AG04450 (cell line): ENCODE measurements at regions of chr19 and their contacts with region 1.

Region 1: DNA sequence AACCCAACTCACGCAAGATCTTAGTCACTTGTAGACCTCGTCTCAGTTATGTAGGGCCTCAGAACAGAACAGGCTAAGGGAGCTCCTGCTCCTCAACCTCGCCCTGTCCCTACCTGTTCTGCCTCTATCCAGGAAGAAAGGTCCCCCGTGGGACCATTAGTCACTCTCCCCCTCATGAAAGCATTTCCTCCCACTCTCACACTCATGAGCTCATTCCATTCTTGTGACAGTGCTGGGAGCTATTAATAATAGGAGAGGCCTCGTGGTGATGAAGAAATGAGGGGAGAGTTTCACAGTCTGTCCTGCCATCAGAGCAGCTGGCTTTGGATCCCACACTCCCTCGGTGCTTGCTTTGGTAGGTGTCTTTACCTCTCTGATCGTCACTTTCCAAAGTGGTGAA is 10.2 kb downstream of the PPP2R1A start:
- DNase-seq: peak; percentile 21
- H3K4me3 ChIP-seq: no peak overlapping the region
- H3K27ac ChIP-seq: peak overlapping the region; percentile 77
- H3K27me3 ChIP-seq: no peaks in the 10 kb centered on the region
- CTCF ChIP-seq: no peak

Region 2: GRCh38 chr19:52115526-52116053 is 84.5 kb before region 1 on chr19:
- CTCF ChIA-PET with region 1: no interaction called
- POLR2A ChIA-PET with region 1: no interaction called
- DNase-seq: no peak
- H3K4me3 ChIP-seq: no peak overlapping the region
- H3K27ac ChIP-seq: no peak overlapping the region
- H3K27me3 ChIP-seq: no peaks in the 10 kb centered on the region
- CTCF ChIP-seq: no peak

Region 3: GRCh38 chr19:52189735-52190486 is 10.1 kb before region 1 on chr19 and contains the start of gene PPP2R1A:
- CTCF ChIA-PET with region 1: no interaction called
- POLR2A ChIA-PET with region 1: interaction called, 11 read pairs
- DNase-seq: peak; percentile 100
- H3K4me3 ChIP-seq: peak within 1 kb of the TSS; percentile 93
- H3K27ac ChIP-seq: peak within 1 kb of the TSS; percentile 94
- H3K27me3 ChIP-seq: no peaks in the 10 kb centered on the region
- CTCF ChIP-seq: no peak
- polyA plus RNA-seq, gene PPP2R1A: 158 and 243 TPM in 2 replicates

Region 4: DNA sequence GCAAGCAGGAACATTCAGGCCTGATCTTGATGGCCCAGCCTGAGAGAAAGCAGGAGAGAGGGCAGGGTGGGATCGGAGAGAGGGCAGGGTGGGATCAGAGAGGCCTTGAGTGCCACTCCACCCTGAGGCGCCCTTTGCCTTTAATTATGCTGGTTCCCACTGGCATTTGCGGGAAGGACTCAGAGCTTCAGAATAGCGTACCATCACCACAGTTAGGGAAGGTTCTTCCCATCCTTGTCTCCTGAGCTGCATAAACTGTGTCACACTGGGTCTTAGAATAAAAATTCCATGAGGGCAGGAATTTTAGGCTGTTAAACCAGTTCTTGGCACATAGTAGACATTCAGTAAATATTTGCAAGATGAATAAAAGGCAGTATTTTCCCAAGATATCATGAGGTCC is 14.1 kb after region 1 on chr19:
- CTCF ChIA-PET with region 1: no interaction called
- POLR2A ChIA-PET with region 1: no interaction called
- DNase-seq: no peak
- H3K4me3 ChIP-seq: no peak overlapping the region
- H3K27ac ChIP-seq: no peak overlapping the region
- H3K27me3 ChIP-seq: no peaks in the 10 kb centered on the region
- CTCF ChIP-seq: no peak